Activated B cell treated with CpG ODN at 0.5 μM for 24 hours (primary cell): ENCODE measurements at regions of chr3 and their contacts with region 1.

Region 1: GRCh38 chr3:53130179-53131061 is at the start of gene RFT1:
- DNase-seq: peak; percentile 95
- ATAC-seq: peak; percentile 89
- H3K4me3 Mint-ChIP-seq: peak within 1 kb of the TSS; percentile 89
- H3K27ac Mint-ChIP-seq: peak within 1 kb of the TSS; percentile 97
- H3K4me1 Mint-ChIP-seq: peaks cover 27% of the 10 kb centered on the region
- H3K27me3 Mint-ChIP-seq: no peaks in the 10 kb centered on the region
- CTCF ChIP-seq: no peak
- total RNA-seq, gene RFT1: 23.6 TPM in 2 replicates

Region 2: GRCh38 chr3:52983336-52983807 is 147.0 kb before region 1 on chr3:
- CTCF ChIA-PET with region 1: no interaction called
- POLR2A ChIA-PET with region 1: no interaction called
- intact Hi-C with region 1: no loop called
- DNase-seq: no peak
- ATAC-seq: peak; percentile 85
- H3K4me3 Mint-ChIP-seq: peak overlapping the region; percentile 36
- H3K27ac Mint-ChIP-seq: peak overlapping the region; percentile 86
- H3K4me1 Mint-ChIP-seq: peaks cover 47% of the 10 kb centered on the region
- H3K27me3 Mint-ChIP-seq: no peaks in the 10 kb centered on the region
- CTCF ChIP-seq: no peak

Region 3: GRCh38 chr3:53073553-53074365 is 56.7 kb before region 1 on chr3:
- CTCF ChIA-PET with region 1: no interaction called
- POLR2A ChIA-PET with region 1: no interaction called
- intact Hi-C with region 1: no loop called
- DNase-seq: no peak
- ATAC-seq: no peak
- H3K4me3 Mint-ChIP-seq: peak overlapping the region; percentile 92
- H3K27ac Mint-ChIP-seq: peak overlapping the region; percentile 89
- H3K4me1 Mint-ChIP-seq: peaks cover 13% of the 10 kb centered on the region
- H3K27me3 Mint-ChIP-seq: no peaks in the 10 kb centered on the region
- CTCF ChIP-seq: no peak

Region 4: GRCh38 chr3:53114011-53114400 is 16.4 kb before region 1 on chr3:
- CTCF ChIA-PET with region 1: interaction called, 6 read pairs
- POLR2A ChIA-PET with region 1: interaction called, 3 read pairs
- intact Hi-C with region 1: loop called (anchors 1 kb)
- DNase-seq: peak; percentile 62
- ATAC-seq: peak; percentile 96
- H3K4me3 Mint-ChIP-seq: no peak overlapping the region
- H3K27ac Mint-ChIP-seq: no peak overlapping the region
- H3K4me1 Mint-ChIP-seq: no peaks in the 10 kb centered on the region
- H3K27me3 Mint-ChIP-seq: no peaks in the 10 kb centered on the region
- CTCF ChIP-seq: no peak

Region 5: DNA sequence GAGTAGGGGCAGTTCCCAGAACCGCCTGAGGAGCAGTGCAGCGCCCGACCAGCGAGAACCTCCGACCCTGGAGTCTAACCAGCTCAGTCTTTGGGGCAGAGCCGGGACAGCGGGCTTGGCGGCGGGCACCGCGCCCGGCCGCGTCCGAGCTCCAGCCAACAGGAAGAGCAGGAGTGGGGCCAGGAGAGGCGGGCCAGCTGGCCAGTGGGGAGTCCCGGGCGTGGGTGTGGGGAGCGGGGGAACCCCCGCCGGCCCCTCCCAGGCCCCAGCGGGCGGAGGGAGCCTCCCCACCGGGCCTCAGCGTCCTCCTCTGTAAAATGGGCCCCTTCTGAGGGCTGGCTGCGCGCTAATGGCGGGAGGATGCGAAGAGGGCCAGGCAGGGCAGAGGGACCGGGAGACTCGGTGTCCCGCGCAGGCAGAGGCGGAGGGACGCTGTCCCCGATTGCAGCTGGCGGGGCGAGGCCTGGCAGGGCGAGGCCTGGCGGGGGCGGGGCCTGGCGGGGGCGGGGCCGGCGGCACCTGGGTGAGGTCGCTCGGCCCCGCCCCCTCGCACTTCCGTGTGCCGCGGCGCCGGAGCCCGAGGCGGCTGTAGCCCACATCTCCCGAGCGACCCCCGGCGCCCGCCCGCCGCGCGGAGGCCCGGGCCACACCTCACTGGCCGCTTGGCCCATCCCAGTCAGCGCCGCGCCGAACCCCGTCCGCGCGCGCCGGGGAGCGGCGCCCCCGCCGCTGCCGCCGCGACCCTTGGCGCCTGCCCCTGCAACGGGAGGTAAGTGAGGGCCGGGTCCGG is 30.4 kb after region 1 on chr3 and contains the start of gene PRKCD:
- CTCF ChIA-PET with region 1: interaction called, 30 read pairs
- POLR2A ChIA-PET with region 1: interaction called, 13 read pairs
- intact Hi-C with region 1: loop called (anchors 1 kb)
- DNase-seq: peak; percentile 77
- ATAC-seq: peak; percentile 66
- H3K4me3 Mint-ChIP-seq: peak within 1 kb of the TSS; percentile 87
- H3K27ac Mint-ChIP-seq: peak within 1 kb of the TSS; percentile 89
- H3K4me1 Mint-ChIP-seq: peaks cover 58% of the 10 kb centered on the region
- H3K27me3 Mint-ChIP-seq: peaks cover 2% of the 10 kb centered on the region
- CTCF ChIP-seq: no peak
- total RNA-seq, gene PRKCD: 60.4 and 63.9 TPM in 2 replicates

Region 6: GRCh38 chr3:53180305-53181023 is 50.0 kb after region 1 on chr3:
- CTCF ChIA-PET with region 1: interaction called, 20 read pairs
- POLR2A ChIA-PET with region 1: interaction called, 5 read pairs
- intact Hi-C with region 1: loop called (anchors 1 kb)
- DNase-seq: peak; percentile 60
- ATAC-seq: peak; percentile 97
- H3K4me3 Mint-ChIP-seq: peak overlapping the region; percentile 70
- H3K27ac Mint-ChIP-seq: peak overlapping the region; percentile 80
- H3K4me1 Mint-ChIP-seq: peaks cover 57% of the 10 kb centered on the region
- H3K27me3 Mint-ChIP-seq: no peaks in the 10 kb centered on the region
- CTCF ChIP-seq: no peak

Region 7: DNA sequence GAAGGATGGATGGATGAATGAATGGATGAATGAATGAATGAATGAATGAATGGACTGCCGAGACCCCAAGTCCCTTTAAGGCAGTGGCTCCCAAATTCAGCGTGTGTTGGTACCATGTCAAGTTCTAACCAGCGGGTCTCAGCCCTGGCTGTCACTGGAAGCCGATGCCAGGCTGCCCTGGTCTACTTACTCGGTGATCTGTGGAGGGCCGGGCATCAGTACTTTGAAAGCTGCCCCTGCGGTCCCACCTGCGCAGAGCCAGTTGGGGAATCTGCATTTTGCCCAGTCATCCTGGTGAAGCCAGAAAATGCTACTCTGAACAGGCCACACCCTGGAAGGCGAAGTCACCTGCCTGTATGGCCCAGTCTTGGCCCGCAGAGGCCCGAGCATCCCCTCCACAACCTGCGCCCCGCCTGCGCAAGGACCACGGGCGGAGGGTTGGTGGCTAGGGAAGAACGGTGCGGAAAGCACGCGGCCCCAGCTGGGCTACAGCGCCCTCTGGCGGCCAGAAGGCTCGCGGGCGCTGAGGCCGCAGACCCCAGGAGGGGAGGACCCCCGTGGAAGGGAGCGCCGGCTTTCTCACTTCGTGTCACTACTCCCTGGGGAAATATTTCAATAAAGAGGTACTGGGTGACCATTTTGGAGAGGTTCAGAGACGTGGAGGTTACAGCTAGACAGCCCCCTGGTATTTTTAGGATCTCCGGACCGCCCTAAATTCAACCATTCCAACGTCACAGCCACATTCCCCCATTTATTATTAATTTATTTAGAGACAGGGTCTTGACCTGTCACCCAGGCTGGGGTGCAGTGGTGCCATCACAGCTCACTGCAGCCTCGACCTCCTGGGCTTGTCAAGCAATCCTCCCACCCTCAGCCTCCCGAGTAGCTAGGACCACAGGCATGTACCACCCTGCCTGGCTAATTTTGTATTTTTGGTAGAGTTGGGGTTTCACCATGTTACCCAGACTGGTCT is 65.5 kb after region 1 on chr3:
- CTCF ChIA-PET with region 1: interaction called, 194 read pairs
- POLR2A ChIA-PET with region 1: interaction called, 22 read pairs
- intact Hi-C with region 1: loop called (anchors 1 kb)
- DNase-seq: peak; percentile 72
- ATAC-seq: peak; percentile 62
- H3K4me3 Mint-ChIP-seq: peak overlapping the region; percentile 19
- H3K27ac Mint-ChIP-seq: peak overlapping the region; percentile 24
- H3K4me1 Mint-ChIP-seq: peaks cover 46% of the 10 kb centered on the region
- H3K27me3 Mint-ChIP-seq: no peaks in the 10 kb centered on the region
- CTCF ChIP-seq: peak; percentile 98

Region 8: GRCh38 chr3:53255775-53256703 is 125.6 kb after region 1 on chr3 and contains the start of gene TKT:
- CTCF ChIA-PET with region 1: no interaction called
- POLR2A ChIA-PET with region 1: no interaction called
- intact Hi-C with region 1: loop called (anchors 1 kb)
- DNase-seq: peak; percentile 75
- ATAC-seq: peak; percentile 87
- H3K4me3 Mint-ChIP-seq: peak within 1 kb of the TSS; percentile 90
- H3K27ac Mint-ChIP-seq: peak within 1 kb of the TSS; percentile 73
- H3K4me1 Mint-ChIP-seq: peaks cover 40% of the 10 kb centered on the region
- H3K27me3 Mint-ChIP-seq: no peaks in the 10 kb centered on the region
- CTCF ChIP-seq: no peak
- total RNA-seq, gene TKT: 154 TPM in 2 replicates

Region 9: GRCh38 chr3:53347261-53348064 is 217.0 kb after region 1 on chr3 and contains the start of gene DCP1A:
- CTCF ChIA-PET with region 1: no interaction called
- POLR2A ChIA-PET with region 1: no interaction called
- intact Hi-C with region 1: loop called (anchors 5 kb)
- DNase-seq: peak; percentile 98
- ATAC-seq: peak; percentile 95
- H3K4me3 Mint-ChIP-seq: peak within 1 kb of the TSS; percentile 98
- H3K27ac Mint-ChIP-seq: peak within 1 kb of the TSS; percentile 95
- H3K4me1 Mint-ChIP-seq: peaks cover 30% of the 10 kb centered on the region
- H3K27me3 Mint-ChIP-seq: no peaks in the 10 kb centered on the region
- CTCF ChIP-seq: no peak
- total RNA-seq, gene DCP1A: 35.1 and 39.3 TPM in 2 replicates

Region 10: GRCh38 chr3:54087581-54088410 is 957.4 kb after region 1 on chr3:
- CTCF ChIA-PET with region 1: no interaction called
- POLR2A ChIA-PET with region 1: no interaction called
- intact Hi-C with region 1: no loop called
- DNase-seq: no peak
- ATAC-seq: no peak
- H3K4me3 Mint-ChIP-seq: no peak overlapping the region
- H3K27ac Mint-ChIP-seq: no peak overlapping the region
- H3K4me1 Mint-ChIP-seq: no peaks in the 10 kb centered on the region
- H3K27me3 Mint-ChIP-seq: peaks cover 36% of the 10 kb centered on the region
- CTCF ChIP-seq: no peak